Endothelial cell of umbilical vein (primary cell): ENCODE measurements at regions of chr7 and their contacts with region 1.

Region 1: GRCh38 chr7:31735991-31736982 is 49.3 kb downstream of the PPP1R17 start:
- DNase-seq: peak; percentile 52
- H3K4me3 ChIP-seq: no peak overlapping the region
- H3K27ac ChIP-seq: no peak overlapping the region
- H3K4me1 ChIP-seq: no peaks in the 10 kb centered on the region
- H3K27me3 ChIP-seq: no peaks in the 10 kb centered on the region
- CTCF ChIP-seq: peak; percentile 77 to 78
- POLR2A ChIP-seq: no peak

Region 2: DNA sequence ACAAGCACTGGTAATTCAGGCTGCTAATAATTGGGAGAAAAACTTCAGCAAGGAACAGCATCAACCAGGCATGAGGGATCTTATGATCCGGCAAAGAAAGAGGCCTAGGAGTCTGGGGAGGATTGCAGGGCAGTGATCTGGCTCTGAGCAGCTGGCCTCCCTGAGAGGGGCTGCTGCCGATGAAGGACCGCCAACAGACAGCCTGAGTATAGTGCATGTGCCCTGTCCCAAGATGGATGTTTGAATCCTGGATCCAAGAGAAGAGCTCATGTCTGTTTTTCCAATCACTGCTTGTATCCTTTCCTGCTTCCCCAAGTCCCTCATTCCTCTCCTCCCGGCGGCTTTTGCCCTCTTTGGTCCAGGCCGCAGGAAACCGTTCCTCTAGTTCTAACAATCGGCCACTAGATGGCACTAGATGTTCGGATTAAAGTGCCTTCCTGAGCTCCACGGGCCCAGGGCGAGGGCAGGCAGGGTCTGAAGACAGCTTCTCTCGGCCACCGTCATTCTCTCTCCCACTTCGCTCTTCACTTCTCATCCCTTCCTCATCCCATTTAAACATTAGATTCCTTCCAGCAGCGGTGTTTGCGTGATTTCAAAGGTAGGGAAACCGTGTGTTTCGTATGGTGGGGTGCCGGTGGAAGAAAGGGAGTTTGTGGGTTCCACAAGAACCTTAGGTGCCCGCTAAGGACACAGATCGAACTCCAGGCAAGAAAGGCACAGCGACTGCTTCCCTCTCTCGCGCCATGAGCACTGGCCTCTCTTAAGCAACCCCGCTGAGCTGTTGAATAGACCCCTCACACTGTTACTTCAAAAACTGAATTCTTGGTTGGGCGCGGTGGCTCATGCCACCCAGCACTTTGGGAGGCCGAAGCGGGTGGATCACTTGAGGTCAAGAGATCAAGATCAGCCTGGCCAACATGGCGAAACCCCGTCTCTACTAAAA is 601.8 kb before region 1 on chr7:
- CTCF ChIA-PET with region 1: interaction called, 20 read pairs
- POLR2A ChIA-PET with region 1: no interaction called
- dilution Hi-C with region 1: no loop called
- intact Hi-C with region 1: loop called (anchors 1 kb)
- DNase-seq: peak; percentile 58
- H3K4me3 ChIP-seq: no peak overlapping the region
- H3K27ac ChIP-seq: no peak overlapping the region
- H3K4me1 ChIP-seq: no peaks in the 10 kb centered on the region
- H3K27me3 ChIP-seq: no peaks in the 10 kb centered on the region
- CTCF ChIP-seq: peak; percentile 64 to 72
- POLR2A ChIP-seq: no peak

Region 3: DNA sequence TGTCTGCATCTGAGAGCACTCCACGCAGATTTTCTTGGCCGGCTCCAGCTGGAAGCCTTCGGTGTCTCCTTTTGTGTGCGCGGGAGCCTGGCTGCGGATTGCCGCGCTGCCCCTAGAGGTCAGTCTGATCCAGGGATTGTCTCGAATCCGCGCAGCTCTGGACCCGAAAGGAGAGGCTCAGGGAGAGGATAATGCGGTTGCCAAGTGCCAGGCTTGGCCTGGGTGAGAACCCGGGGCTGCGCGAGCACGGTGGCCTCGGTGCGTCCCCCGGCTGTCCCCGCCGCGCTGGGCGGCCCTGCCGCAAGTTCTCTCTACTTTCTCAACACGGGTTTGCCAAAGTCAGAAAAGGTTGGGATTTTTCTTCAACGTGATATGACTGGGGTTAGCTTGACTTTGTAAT is 543.3 kb before region 1 on chr7:
- CTCF ChIA-PET with region 1: interaction called, 3 read pairs
- POLR2A ChIA-PET with region 1: no interaction called
- dilution Hi-C with region 1: no loop called
- intact Hi-C with region 1: loop called (anchors 1 kb)
- DNase-seq: peak; percentile 36
- H3K4me3 ChIP-seq: no peak overlapping the region
- H3K27ac ChIP-seq: no peak overlapping the region
- H3K4me1 ChIP-seq: no peaks in the 10 kb centered on the region
- H3K27me3 ChIP-seq: peaks cover 1 to 4% of the 10 kb centered on the region in 2 experiments
- CTCF ChIP-seq: peak; percentile 62 to 80
- POLR2A ChIP-seq: no peak

Region 4: GRCh38 chr7:31373337-31374289 is 362.7 kb before region 1 on chr7:
- CTCF ChIA-PET with region 1: interaction called, 8 read pairs
- POLR2A ChIA-PET with region 1: no interaction called
- dilution Hi-C with region 1: no loop called
- intact Hi-C with region 1: loop called (anchors 1 kb)
- DNase-seq: peak; percentile 24
- H3K4me3 ChIP-seq: no peak overlapping the region
- H3K27ac ChIP-seq: no peak overlapping the region
- H3K4me1 ChIP-seq: no peaks in the 10 kb centered on the region
- H3K27me3 ChIP-seq: no peaks in the 10 kb centered on the region
- CTCF ChIP-seq: peak; percentile 52 to 57
- POLR2A ChIP-seq: no peak

Region 5: GRCh38 chr7:31408140-31408745 is 328.0 kb before region 1 on chr7:
- CTCF ChIA-PET with region 1: no interaction called
- POLR2A ChIA-PET with region 1: no interaction called
- dilution Hi-C with region 1: no loop called
- intact Hi-C with region 1: no loop called
- DNase-seq: no peak
- H3K4me3 ChIP-seq: no peak overlapping the region
- H3K27ac ChIP-seq: no peak overlapping the region
- H3K4me1 ChIP-seq: no peaks in the 10 kb centered on the region
- H3K27me3 ChIP-seq: no peaks in the 10 kb centered on the region
- CTCF ChIP-seq: no peak
- POLR2A ChIP-seq: no peak

Region 6: GRCh38 chr7:31648288-31648687 is 88.0 kb before region 1 on chr7:
- CTCF ChIA-PET with region 1: interaction called, 4 read pairs
- POLR2A ChIA-PET with region 1: no interaction called
- dilution Hi-C with region 1: no loop called
- intact Hi-C with region 1: loop called (anchors 1 kb)
- DNase-seq: no peak
- H3K4me3 ChIP-seq: no peak overlapping the region
- H3K27ac ChIP-seq: no peak overlapping the region
- H3K4me1 ChIP-seq: no peaks in the 10 kb centered on the region
- H3K27me3 ChIP-seq: no peaks in the 10 kb centered on the region
- CTCF ChIP-seq: peak in 1 of 2 donors; percentile 13
- POLR2A ChIP-seq: no peak